ENCODE measurements at regions of chr17 and their contacts with region 1.

Region 1: DNA sequence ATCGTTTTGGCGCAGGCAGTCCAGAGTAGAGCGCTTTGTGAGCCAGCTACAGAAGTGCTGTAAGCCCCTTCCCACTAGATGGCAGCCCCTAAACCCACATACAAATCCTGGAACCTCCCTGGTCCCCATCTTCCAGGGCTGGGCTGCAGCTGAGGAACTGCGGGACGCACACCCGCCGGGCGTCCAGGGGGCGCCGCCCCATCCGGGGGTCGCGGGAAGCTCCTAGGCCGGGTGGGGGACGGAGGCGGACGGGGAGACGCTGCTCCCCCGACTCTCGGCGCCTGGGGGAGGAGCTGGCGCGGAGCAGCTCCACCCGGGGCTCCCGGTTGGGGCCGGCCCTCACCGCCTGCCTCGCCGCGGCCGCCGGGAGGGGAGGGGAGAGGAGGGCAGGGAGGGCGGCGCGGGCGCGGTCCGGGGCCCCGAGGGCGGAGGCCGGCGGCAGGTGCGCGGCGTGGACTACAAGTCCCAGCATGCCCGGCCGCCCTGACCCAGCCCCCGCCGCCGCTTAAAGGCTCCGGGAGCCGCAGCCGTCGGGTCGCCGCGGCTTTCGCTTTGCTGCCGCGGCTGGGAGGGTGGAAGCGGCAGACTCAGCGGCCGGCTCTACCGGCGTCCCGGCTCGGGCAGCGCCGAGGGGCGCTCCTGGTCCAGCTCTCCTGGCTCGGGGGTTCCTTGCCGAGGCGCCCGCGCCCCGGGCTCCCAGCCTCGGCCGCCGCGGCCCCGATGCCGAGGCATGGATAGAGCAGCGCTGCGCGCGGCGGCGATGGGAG is at the start of gene KSR1:
- DNase-seq: peak; percentile 82
- H3K4me3 ChIP-seq: peak within 1 kb of the TSS; percentile 88
- H3K27ac ChIP-seq: peak within 1 kb of the TSS; percentile 51
- H3K4me1 ChIP-seq: no peaks in the 10 kb centered on the region
- H3K27me3 ChIP-seq: no peaks in the 10 kb centered on the region
- CTCF ChIP-seq: no peak
- total RNA-seq, gene KSR1: 13.9 to 16.5 TPM

Region 2: DNA sequence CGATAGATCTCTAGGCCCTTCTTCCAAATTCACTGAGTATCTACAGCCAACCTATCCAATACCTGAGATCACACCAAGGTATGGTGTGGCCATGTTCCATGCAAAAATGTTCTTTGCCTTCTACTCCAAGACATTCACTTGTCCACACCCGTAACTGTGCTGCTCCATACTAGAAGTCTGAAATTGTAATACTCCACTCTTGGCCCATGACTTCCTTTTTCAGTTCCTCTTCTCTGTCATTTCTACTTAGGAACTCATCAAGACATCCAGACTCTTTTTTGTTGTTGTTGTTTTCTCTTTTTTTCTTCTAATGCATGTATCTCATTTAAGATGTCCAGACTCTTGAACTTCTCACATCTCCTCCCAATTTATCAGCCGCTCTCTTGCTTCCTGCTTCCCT is 42.3 kb before region 1 on chr17:
- intact Hi-C with region 1: no loop called
- DNase-seq: no peak
- H3K4me3 ChIP-seq: no peak overlapping the region
- H3K27ac ChIP-seq: no peak overlapping the region
- H3K4me1 ChIP-seq: no peaks in the 10 kb centered on the region
- H3K27me3 ChIP-seq: no peaks in the 10 kb centered on the region
- CTCF ChIP-seq: no peak

Region 3: GRCh38 chr17:27569257-27569722 is 113.2 kb after region 1 on chr17:
- intact Hi-C with region 1: loop called (anchors 10 kb)
- DNase-seq: no peak
- H3K4me3 ChIP-seq: no peak overlapping the region
- H3K27ac ChIP-seq: no peak overlapping the region
- H3K4me1 ChIP-seq: no peaks in the 10 kb centered on the region
- H3K27me3 ChIP-seq: no peaks in the 10 kb centered on the region
- CTCF ChIP-seq: peak; percentile 19

Measured in colonic mucosa (tissue), 4 donors.